PC-3 (cell line): ENCODE measurements at regions of chr1 and their contacts with region 1.

Region 1: GRCh38 chr1:45884700-45885099 is 81.3 kb downstream of the MAST2 start:
- DNase-seq: peak; percentile 83
- ATAC-seq: peak; percentile 98
- H3K4me3 ChIP-seq: no peak overlapping the region
- H3K27ac ChIP-seq: peak overlapping the region; percentile 54
- H3K4me1 ChIP-seq: peaks cover 19% of the 10 kb centered on the region
- H3K27me3 ChIP-seq: no peaks in the 10 kb centered on the region
- CTCF ChIP-seq: no peak

Region 2: GRCh38 chr1:45686317-45687013 is 198.2 kb before region 1 on chr1 and contains the start of gene GPBP1L1:
- CTCF ChIA-PET with region 1: no interaction called
- POLR2A ChIA-PET with region 1: no interaction called
- intact Hi-C with region 1: loop called (anchors 5 kb)
- DNase-seq: peak; percentile 94
- ATAC-seq: peak; percentile 68
- H3K4me3 ChIP-seq: peak within 1 kb of the TSS; percentile 99
- H3K27ac ChIP-seq: peak within 1 kb of the TSS; percentile 98
- H3K4me1 ChIP-seq: peaks cover 22% of the 10 kb centered on the region
- H3K27me3 ChIP-seq: no peaks in the 10 kb centered on the region
- CTCF ChIP-seq: no peak
- total RNA-seq, gene GPBP1L1: 63.0 and 97.7 TPM in 2 replicates

Region 3: DNA sequence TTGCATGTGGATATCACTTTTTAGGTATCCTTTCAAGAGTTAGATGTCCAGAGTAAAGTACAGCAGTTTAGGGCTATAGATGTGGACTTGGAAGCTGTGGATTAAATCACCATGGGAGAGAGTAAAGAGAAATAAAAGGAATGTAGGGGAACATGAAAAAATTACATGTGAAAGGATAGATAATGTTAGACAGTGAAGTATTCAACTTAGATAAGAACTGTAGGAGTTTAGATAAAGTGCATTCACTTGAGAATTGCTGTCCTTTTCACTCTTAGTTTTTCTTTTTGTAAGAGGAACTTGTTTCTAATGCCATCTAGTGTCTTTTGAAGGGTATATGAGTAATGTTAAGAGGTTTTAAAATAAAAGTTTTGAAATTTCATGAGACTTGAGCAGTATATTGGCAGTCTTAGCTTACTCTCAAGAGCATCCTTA is 41.2 kb before region 1 on chr1:
- CTCF ChIA-PET with region 1: interaction called, 3 read pairs
- POLR2A ChIA-PET with region 1: no interaction called
- intact Hi-C with region 1: loop called (anchors 1 kb)
- DNase-seq: peak; percentile 22
- ATAC-seq: peak; percentile 64
- H3K4me3 ChIP-seq: no peak overlapping the region
- H3K27ac ChIP-seq: no peak overlapping the region
- H3K4me1 ChIP-seq: no peaks in the 10 kb centered on the region; the same call in 1 of the 2 replicates
- H3K27me3 ChIP-seq: no peaks in the 10 kb centered on the region
- CTCF ChIP-seq: peak; percentile 50; the same call in 1 of the 2 replicates

Region 4: DNA sequence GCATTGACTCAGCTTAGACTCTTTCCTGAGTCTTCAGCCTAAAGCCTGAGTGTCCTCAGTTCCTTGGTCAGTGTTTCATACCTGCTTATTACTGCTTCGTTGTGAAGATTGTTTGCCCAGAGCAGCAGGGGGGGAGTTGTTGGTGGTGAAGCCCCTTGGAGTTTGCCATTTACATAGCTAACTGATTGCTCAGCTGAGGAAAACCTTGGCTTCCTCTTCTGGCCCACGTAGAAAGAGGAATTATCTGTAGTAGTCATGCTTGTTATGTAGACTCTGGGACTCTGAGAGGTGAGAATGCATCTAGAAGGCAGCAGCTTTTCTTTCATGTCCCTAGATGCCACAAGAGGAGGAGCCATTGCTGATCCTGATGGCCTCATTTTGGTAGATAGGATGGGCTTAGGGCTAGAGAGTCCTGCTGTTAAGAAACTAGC is 44.6 kb after region 1 on chr1:
- CTCF ChIA-PET with region 1: interaction called, 3 read pairs
- POLR2A ChIA-PET with region 1: no interaction called
- intact Hi-C with region 1: loop called (anchors 5 kb)
- DNase-seq: peak; percentile 87
- ATAC-seq: peak; percentile 92
- H3K4me3 ChIP-seq: no peak overlapping the region; the same call in 1 of the 2 replicates
- H3K27ac ChIP-seq: peak overlapping the region; percentile 24; the same call in 1 of the 2 replicates
- H3K4me1 ChIP-seq: peaks cover 20% of the 10 kb centered on the region
- H3K27me3 ChIP-seq: no peaks in the 10 kb centered on the region
- CTCF ChIP-seq: no peak

Region 5: DNA sequence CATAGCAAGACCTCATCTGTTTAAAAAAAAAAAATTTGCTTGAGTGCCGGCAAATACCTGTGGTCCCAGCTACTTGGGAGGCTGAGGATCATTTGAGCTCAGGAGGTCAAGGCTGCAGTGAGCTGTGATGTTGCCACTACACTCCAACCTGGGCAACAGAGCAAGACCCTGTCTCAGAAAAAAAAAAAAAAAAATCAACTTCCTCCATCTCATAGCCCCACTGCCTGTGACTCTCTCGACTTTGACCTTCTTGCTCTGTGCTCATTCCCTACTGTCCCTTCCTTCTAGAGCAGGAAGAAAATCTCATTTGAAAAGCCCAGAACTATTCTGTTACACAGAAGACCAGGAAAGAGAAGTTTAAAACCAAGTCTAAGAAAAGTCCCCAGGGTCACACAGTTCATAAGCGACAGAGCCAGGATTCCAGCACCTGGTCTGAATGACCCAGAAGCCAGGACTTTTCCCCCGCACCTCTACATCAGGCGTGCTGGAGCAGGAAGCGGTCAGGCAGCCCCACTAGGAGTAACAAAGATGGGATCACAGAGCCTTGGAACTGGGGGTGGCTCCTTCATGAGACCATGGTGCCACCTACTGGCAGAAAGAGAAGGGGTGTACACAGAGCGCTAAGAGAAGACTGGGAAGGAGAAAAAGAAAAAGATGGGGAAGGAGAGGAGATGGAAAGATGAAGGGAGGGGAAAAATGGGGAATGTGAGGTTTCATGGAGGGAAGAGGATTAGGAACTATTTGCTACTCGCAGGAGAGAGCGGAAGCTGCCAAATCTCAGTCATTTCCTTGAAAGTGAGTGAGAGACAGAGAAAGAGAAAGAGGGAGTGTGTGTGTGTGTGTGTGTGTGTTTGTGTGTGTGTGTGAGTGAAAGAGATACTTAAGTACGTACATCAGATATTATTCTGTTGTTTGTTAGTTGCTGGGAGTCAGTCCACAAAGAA is 294.7 kb after region 1 on chr1:
- CTCF ChIA-PET with region 1: no interaction called
- POLR2A ChIA-PET with region 1: no interaction called
- intact Hi-C with region 1: loop called (anchors 2 kb)
- DNase-seq: peak; percentile 89
- ATAC-seq: peak; percentile 49
- H3K4me3 ChIP-seq: no peak overlapping the region
- H3K27ac ChIP-seq: peak overlapping the region; percentile 99
- H3K4me1 ChIP-seq: peaks cover 49% of the 10 kb centered on the region
- H3K27me3 ChIP-seq: no peaks in the 10 kb centered on the region
- CTCF ChIP-seq: peak; percentile 96